PC-9 (cell line): ENCODE measurements at regions of chr1 and their contacts with region 1.

Region 1: GRCh38 chr1:151881456-151881855 is 27.9 kb downstream of the THEM4 start:
- DNase-seq: no peak
- H3K4me3 ChIP-seq: no peak overlapping the region
- H3K27ac ChIP-seq: no peak overlapping the region
- H3K4me1 ChIP-seq: no peaks in the 10 kb centered on the region; the same call in 1 of the 2 replicates
- H3K27me3 ChIP-seq: no peaks in the 10 kb centered on the region
- CTCF ChIP-seq: no peak

Region 2: GRCh38 chr1:151811147-151811546 is 70.3 kb before region 1 on chr1:
- CTCF ChIA-PET with region 1: no interaction called
- POLR2A ChIA-PET with region 1: no interaction called
- intact Hi-C with region 1: no loop called
- DNase-seq: no peak
- H3K4me3 ChIP-seq: no peak overlapping the region
- H3K27ac ChIP-seq: no peak overlapping the region
- H3K4me1 ChIP-seq: no peaks in the 10 kb centered on the region
- H3K27me3 ChIP-seq: no peaks in the 10 kb centered on the region; the same call in 1 of the 2 replicates
- CTCF ChIP-seq: no peak

Region 3: GRCh38 chr1:151853411-151853943 is 28.0 kb before region 1 on chr1 and contains the start of gene THEM5:
- CTCF ChIA-PET with region 1: interaction called, 10 read pairs
- POLR2A ChIA-PET with region 1: no interaction called
- intact Hi-C with region 1: no loop called
- DNase-seq: no peak
- H3K4me3 ChIP-seq: no peak within 1 kb of the TSS
- H3K27ac ChIP-seq: no peak within 1 kb of the TSS
- H3K4me1 ChIP-seq: no peaks in the 10 kb centered on the region
- H3K27me3 ChIP-seq: no peaks in the 10 kb centered on the region
- CTCF ChIP-seq: no peak
- total RNA-seq, gene THEM5: not detected in 2 replicates

Region 4: GRCh38 chr1:151867785-151868411 is 13.6 kb before region 1 on chr1:
- CTCF ChIA-PET with region 1: no interaction called
- POLR2A ChIA-PET with region 1: no interaction called
- intact Hi-C with region 1: no loop called
- DNase-seq: peak in 1 of 2 experiments; percentile 55
- H3K4me3 ChIP-seq: no peak overlapping the region
- H3K27ac ChIP-seq: no peak overlapping the region
- H3K4me1 ChIP-seq: peaks cover 8% of the 10 kb centered on the region
- H3K27me3 ChIP-seq: no peaks in the 10 kb centered on the region
- CTCF ChIP-seq: no peak

Region 5: GRCh38 chr1:152419917-152420316 is 538.5 kb after region 1 on chr1:
- CTCF ChIA-PET with region 1: no interaction called
- POLR2A ChIA-PET with region 1: no interaction called
- intact Hi-C with region 1: no loop called
- DNase-seq: no peak
- H3K4me3 ChIP-seq: no peak overlapping the region
- H3K27ac ChIP-seq: no peak overlapping the region
- H3K4me1 ChIP-seq: no peaks in the 10 kb centered on the region
- H3K27me3 ChIP-seq: peaks cover 50% of the 10 kb centered on the region
- CTCF ChIP-seq: no peak